Activated CD8-positive, alpha-beta T cell treated with anti-CD3 and anti-CD28 coated beads for 36 hours (primary cell): ENCODE measurements at regions of chr19 and their contacts with region 1.

Region 1: DNA sequence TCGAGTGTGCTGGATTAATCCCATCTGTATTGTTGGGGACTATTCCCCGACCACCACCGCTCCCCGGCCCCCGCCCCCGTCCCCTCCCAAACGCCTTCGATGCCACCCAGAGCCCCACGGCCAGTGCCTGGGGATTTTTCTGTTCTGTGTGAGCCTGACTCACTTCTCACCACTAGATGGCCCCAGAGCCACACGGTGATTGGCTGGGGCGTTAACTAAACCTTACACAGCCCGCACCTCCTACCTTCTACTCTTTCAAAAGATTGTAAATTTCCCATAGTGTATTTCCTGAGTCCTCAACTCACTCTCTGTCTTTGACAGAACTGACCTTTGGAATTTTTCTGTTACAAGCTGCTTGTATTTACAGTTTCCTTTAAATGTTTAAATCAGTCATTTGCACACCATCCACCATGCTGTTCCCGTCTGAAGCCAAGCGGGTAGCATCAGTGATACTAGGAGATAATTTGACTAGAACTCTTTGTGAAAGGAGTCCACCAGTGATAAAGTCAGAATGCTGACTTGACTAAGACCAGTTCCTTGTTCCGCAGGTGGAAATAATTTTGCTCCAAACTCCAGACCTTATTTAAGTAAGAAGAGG is 61.4 kb downstream of the RFX2 start:
- DNase-seq: peak; percentile 87
- ATAC-seq: peak; percentile 100
- H3K4me3 Mint-ChIP-seq: no peak overlapping the region
- H3K27ac Mint-ChIP-seq: no peak overlapping the region
- H3K4me1 Mint-ChIP-seq: peaks cover 3% of the 10 kb centered on the region
- H3K27me3 Mint-ChIP-seq: no peaks in the 10 kb centered on the region
- CTCF ChIP-seq: peak; percentile 85

Region 2: DNA sequence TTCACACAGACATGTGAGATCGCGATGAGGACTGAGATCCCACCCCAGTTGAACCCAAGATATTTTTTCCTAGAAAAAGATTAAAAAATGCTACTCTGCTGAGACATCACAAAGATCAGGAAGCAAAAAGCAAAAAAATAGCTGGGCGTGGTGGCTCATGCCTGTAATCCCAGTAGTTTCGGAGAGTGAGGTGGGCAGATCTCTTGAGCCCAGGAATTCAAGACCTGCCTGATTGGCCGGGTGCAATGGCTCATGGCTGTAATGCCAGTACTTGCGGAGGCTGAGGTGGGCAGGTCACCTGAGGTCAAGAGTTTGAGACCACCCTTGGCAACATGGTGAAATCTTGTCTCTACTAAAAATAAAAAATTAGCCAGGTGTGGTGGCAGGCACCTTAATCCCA is 198.7 kb before region 1 on chr19:
- CTCF ChIA-PET with region 1: no interaction called
- POLR2A ChIA-PET with region 1: no interaction called
- intact Hi-C with region 1: no loop called
- DNase-seq: no peak
- ATAC-seq: no peak
- H3K4me3 Mint-ChIP-seq: no peak overlapping the region
- H3K27ac Mint-ChIP-seq: no peak overlapping the region
- H3K4me1 Mint-ChIP-seq: no peaks in the 10 kb centered on the region
- H3K27me3 Mint-ChIP-seq: no peaks in the 10 kb centered on the region
- CTCF ChIP-seq: no peak

Region 3: DNA sequence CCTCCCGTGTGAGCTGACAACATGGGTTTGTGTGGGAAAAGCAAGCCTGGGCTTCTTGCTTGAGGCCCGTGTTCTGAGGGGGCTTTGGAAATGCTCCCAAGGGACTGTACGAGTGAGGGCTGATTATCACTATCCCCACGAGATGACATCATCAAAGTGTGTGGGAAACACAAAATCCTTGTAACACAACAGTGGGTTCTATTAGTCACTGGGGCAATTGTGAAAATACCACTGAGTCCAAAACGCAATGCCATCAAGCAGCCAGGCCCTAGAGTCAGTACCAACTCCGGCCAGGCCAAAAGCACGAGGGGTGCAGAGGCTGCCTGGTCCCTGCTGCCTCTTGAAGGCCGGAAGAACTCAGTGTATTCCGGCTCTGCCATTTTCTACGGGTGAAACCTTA is 105.3 kb before region 1 on chr19:
- CTCF ChIA-PET with region 1: no interaction called
- POLR2A ChIA-PET with region 1: no interaction called
- intact Hi-C with region 1: no loop called
- DNase-seq: no peak
- ATAC-seq: peak; percentile 30
- H3K4me3 Mint-ChIP-seq: no peak overlapping the region
- H3K27ac Mint-ChIP-seq: no peak overlapping the region
- H3K4me1 Mint-ChIP-seq: peaks cover 50% of the 10 kb centered on the region
- H3K27me3 Mint-ChIP-seq: no peaks in the 10 kb centered on the region
- CTCF ChIP-seq: no peak

Region 4: DNA sequence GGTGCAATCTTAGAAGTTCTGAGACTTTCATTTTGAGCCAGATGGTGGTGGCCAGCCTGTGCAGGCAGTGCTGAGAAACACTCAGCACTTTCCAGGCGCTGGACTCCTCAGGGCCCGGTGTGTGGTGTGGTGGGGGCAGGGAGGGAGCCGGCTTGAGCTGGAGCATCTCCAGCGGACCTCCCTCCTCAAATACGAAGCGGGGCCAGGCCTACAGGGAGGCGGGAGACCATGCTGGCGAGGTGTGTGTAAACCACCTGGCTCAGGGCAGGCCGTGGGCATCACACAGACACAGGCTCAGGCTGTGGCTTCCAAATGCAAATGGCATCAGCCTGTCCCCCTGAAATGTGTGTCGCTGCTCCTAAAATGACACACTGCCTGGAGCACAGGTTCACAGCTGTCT is 37.7 kb before region 1 on chr19:
- CTCF ChIA-PET with region 1: no interaction called
- POLR2A ChIA-PET with region 1: no interaction called
- intact Hi-C with region 1: no loop called
- DNase-seq: no peak
- ATAC-seq: no peak
- H3K4me3 Mint-ChIP-seq: no peak overlapping the region
- H3K27ac Mint-ChIP-seq: no peak overlapping the region
- H3K4me1 Mint-ChIP-seq: no peaks in the 10 kb centered on the region
- H3K27me3 Mint-ChIP-seq: no peaks in the 10 kb centered on the region
- CTCF ChIP-seq: no peak

Region 5: DNA sequence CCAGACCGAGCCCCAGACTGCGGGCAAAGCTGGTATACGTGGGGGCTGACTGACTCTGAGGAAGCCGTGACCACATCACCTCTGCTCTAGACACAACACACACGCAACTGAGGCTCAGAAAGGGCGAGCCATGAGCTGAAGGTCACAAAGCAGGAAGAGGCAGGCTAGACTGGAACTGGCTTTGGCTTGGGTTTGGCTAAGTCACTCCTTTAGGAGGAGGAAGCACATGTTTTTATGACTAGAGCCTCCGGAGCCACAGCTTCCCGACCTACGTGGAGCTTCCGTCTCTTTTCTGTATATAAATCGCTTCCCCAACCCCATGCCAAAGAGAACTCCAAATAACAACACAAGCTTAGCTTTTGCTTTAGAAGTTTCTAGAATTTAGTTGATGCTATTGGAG is 13.4 kb after region 1 on chr19:
- CTCF ChIA-PET with region 1: interaction called, 21 read pairs
- POLR2A ChIA-PET with region 1: no interaction called
- intact Hi-C with region 1: no loop called
- DNase-seq: peak; percentile 81
- ATAC-seq: peak; percentile 84
- H3K4me3 Mint-ChIP-seq: no peak overlapping the region
- H3K27ac Mint-ChIP-seq: peak overlapping the region; percentile 64
- H3K4me1 Mint-ChIP-seq: peaks cover 60% of the 10 kb centered on the region
- H3K27me3 Mint-ChIP-seq: no peaks in the 10 kb centered on the region
- CTCF ChIP-seq: no peak

Region 6: DNA sequence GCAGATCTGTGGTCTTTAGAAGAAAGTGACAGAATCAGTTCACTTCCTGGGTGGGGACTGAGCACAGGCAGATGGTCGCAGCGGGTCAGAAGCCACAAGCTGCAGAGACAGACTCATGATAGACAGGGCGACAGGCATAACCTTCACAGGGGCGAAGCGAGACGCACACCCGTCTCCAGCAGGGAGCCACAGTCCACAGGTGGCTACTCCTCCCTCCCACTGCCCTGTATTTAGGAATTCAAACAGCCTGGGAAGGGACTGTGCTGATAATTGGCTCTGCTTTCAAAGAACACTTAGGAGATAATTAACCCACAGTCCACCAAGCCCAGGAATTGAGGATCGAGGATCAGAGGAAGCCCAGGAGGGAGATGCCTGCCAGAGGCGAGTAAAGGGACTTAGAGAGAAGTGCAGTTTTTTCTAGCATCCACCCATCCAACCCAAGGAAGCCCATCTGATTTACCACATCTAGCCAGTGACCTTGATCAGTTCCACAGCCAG is 38.2 kb after region 1 on chr19:
- CTCF ChIA-PET with region 1: interaction called, 10 read pairs
- POLR2A ChIA-PET with region 1: no interaction called
- intact Hi-C with region 1: no loop called
- DNase-seq: peak; percentile 64
- ATAC-seq: peak; percentile 82
- H3K4me3 Mint-ChIP-seq: peak overlapping the region; percentile 39
- H3K27ac Mint-ChIP-seq: peak overlapping the region; percentile 55
- H3K4me1 Mint-ChIP-seq: peaks cover 21% of the 10 kb centered on the region
- H3K27me3 Mint-ChIP-seq: no peaks in the 10 kb centered on the region
- CTCF ChIP-seq: no peak

Region 7: DNA sequence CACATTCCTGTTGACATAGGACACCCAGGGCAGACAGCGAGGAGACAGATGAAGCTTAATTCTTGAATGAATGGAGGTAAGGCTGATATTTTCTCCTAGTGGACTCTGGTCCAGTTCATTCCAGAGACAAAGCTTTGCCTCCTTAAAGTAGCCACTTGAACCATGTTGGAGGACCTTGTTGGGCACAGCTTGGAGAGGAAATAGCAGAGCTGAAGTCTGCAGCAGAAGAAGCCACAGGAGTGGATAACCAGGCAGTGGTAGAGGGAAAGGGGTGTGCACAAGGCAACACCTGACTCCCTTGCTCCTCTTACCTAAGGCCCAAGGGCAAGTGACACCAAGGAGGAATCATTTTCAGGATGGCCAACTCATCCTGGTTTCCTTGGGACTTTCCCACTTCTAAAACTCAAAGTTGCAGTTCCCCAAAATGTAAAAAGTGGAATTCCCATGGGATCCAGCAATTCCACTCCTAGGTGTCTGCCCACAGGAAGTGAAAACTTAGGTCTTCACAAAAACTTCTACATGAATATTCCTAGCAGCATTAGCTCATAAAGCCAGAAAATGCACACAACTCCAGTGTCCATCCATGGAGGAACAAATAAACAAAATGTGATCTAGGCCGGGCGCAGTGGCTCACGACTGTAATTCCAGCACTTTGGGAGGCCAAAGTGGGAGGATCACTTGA is 68.0 kb after region 1 on chr19:
- CTCF ChIA-PET with region 1: interaction called, 218 read pairs
- POLR2A ChIA-PET with region 1: no interaction called
- intact Hi-C with region 1: no loop called
- DNase-seq: no peak
- ATAC-seq: no peak
- H3K4me3 Mint-ChIP-seq: no peak overlapping the region
- H3K27ac Mint-ChIP-seq: no peak overlapping the region
- H3K4me1 Mint-ChIP-seq: no peaks in the 10 kb centered on the region
- H3K27me3 Mint-ChIP-seq: no peaks in the 10 kb centered on the region
- CTCF ChIP-seq: no peak

Region 8: DNA sequence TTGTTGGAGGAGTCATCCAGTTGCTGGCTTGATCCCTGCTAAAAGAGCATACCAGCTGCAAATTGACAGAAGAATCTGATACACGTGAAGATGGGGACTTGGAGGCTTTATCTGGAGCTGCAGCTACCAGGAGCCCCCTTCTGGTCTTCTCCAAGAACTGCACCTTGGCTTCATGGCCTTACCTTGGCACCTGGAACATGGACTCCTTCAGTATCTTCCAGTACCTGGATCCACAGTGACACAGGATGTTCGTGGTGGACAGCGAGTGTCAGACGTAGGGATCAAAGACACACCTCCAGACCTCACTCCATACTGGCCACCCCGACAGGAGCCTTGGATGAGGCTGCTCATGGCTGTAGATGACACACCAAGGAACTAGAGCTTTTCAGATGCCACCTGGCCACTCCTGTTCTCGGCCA is 76.7 kb after region 1 on chr19:
- CTCF ChIA-PET with region 1: interaction called, 218 read pairs
- POLR2A ChIA-PET with region 1: no interaction called
- intact Hi-C with region 1: loop called (anchors 1 kb)
- DNase-seq: peak; percentile 76
- ATAC-seq: peak; percentile 95
- H3K4me3 Mint-ChIP-seq: no peak overlapping the region
- H3K27ac Mint-ChIP-seq: no peak overlapping the region
- H3K4me1 Mint-ChIP-seq: no peaks in the 10 kb centered on the region
- H3K27me3 Mint-ChIP-seq: no peaks in the 10 kb centered on the region
- CTCF ChIP-seq: peak; percentile 87

Region 9: DNA sequence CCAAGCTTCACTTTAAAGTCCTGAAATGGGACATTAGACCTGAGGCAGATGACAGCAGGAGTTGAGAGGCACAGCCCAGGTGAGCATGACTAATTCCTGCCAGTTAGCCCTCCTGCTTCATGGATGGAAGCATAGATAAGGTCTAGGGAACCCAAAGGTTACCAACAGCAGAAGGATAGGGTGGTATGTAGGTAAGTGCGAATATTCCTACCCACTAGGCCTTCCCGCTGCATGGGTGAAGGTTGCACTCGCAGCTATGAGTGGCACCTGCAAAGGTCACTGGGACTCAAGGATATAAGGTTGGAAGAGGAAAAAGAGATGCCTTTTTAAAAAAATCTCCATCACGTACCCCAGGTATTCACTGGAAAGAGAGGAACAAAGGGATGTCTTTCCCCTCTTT is 243.1 kb after region 1 on chr19:
- CTCF ChIA-PET with region 1: no interaction called
- POLR2A ChIA-PET with region 1: no interaction called
- intact Hi-C with region 1: no loop called
- DNase-seq: peak; percentile 18
- ATAC-seq: no peak
- H3K4me3 Mint-ChIP-seq: no peak overlapping the region
- H3K27ac Mint-ChIP-seq: no peak overlapping the region
- H3K4me1 Mint-ChIP-seq: no peaks in the 10 kb centered on the region
- H3K27me3 Mint-ChIP-seq: peaks cover 1% of the 10 kb centered on the region
- CTCF ChIP-seq: no peak